ENCODE measurements at regions of chr14 and their contacts with region 1.

Region 1: GRCh38 chr14:46651526-46652144 is at the start of gene RPL10L:
- DNase-seq: no peak
- H3K4me3 ChIP-seq: no peak within 1 kb of the TSS
- H3K27ac ChIP-seq: no peak within 1 kb of the TSS
- H3K4me1 ChIP-seq: no peaks in the 10 kb centered on the region
- H3K27me3 ChIP-seq: no peaks in the 10 kb centered on the region
- CTCF ChIP-seq: 0 out of 2 replicates have a peak, but pooled peaks have one; percentile 27
- total RNA-seq, gene RPL10L: not detected in 2 replicates

Region 2: DNA sequence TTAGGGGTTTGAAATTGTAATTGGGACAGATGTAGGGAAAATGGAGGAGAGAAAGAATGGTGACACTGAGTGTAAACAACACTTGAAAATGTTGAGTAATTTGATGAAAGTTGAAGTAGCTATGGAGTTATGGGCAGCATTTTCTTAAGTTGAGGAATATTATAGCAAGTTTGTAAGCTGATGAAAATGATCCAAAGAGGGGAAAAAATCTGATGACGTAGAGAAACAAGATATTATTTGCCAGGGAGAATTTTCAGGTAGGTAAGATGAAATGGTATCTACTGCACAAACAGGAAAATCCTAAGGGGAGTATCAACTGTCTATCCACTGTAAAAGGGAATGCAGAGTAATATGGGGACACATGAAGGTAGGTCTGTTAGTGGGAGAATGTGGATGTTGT is 517.5 kb before region 1 on chr14:
- CTCF ChIA-PET with region 1: no interaction called
- POLR2A ChIA-PET with region 1: no interaction called
- intact Hi-C with region 1: no loop called
- DNase-seq: no peak
- H3K4me3 ChIP-seq: no peak overlapping the region
- H3K27ac ChIP-seq: no peak overlapping the region
- H3K4me1 ChIP-seq: no peaks in the 10 kb centered on the region
- H3K27me3 ChIP-seq: no peaks in the 10 kb centered on the region
- CTCF ChIP-seq: no peak

Region 3: DNA sequence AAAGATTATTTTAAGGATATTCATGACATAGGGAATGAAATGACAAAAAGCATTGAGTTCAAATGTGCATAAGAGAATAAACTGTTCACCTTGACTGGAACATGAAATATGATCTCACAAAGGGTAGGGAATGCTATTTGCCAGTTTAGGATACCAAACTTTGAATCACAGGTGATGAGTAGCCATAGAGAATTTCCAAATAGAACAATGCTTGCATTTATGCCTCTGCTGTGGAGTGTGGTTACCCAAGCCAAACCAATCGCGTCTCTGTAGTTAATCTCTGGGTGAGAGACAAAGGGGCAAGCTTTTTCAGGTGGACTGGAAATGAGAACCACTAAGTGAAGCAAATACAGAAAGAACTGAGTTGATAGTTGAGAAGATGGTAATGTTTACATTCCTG is 371.1 kb after region 1 on chr14:
- CTCF ChIA-PET with region 1: interaction called, 16 read pairs
- POLR2A ChIA-PET with region 1: no interaction called
- intact Hi-C with region 1: no loop called
- DNase-seq: no peak
- H3K4me3 ChIP-seq: no peak overlapping the region
- H3K27ac ChIP-seq: no peak overlapping the region
- H3K4me1 ChIP-seq: no peaks in the 10 kb centered on the region
- H3K27me3 ChIP-seq: no peaks in the 10 kb centered on the region
- CTCF ChIP-seq: no peak